ENCODE measurements at regions of chr9 and their contacts with region 1.

Region 1: DNA sequence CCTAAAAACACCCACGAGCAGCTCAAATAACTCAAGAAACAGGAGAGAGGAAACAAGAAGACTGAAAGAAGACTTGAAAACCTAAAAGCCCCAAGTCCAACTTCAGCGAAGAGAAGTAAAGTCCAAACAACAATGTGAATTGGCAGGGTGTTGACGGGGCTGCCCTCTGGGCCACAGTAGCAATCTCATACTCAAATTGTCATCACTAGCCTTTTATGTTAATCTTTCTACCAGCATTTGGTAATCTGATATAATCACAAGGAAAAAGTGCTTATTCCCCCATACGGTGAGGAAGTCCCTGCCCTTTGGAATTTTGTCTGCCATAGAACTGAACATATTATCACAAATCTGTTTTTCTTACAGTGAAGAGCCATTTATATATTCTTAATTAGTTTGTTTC is 51.5 kb upstream of the IFNE start:
- DNase-seq: no peak
- H3K4me3 ChIP-seq: no peak overlapping the region
- H3K27ac ChIP-seq: no peak overlapping the region
- H3K4me1 ChIP-seq: peaks cover 14% of the 10 kb centered on the region
- H3K27me3 ChIP-seq: no peaks in the 10 kb centered on the region
- CTCF ChIP-seq: no peak

Region 2: GRCh38 chr9:21473236-21473635 is 60.4 kb before region 1 on chr9:
- CTCF ChIA-PET with region 1: no interaction called
- dilution Hi-C with region 1: no loop called
- in situ Hi-C with region 1: loop called in 1 of 2 experiments (anchors 10 kb)
- intact Hi-C with region 1: no loop called
- DNase-seq: no peak
- H3K4me3 ChIP-seq: no peak overlapping the region
- H3K27ac ChIP-seq: no peak overlapping the region
- H3K4me1 ChIP-seq: no peaks in the 10 kb centered on the region
- H3K27me3 ChIP-seq: no peaks in the 10 kb centered on the region
- CTCF ChIP-seq: peak in 1 of 2 donors; percentile 27

Measured in mammary epithelial cell (primary cell).